GM12878 (cell line): ENCODE measurements at regions of chr18 and their contacts with region 1.

Region 1: DNA sequence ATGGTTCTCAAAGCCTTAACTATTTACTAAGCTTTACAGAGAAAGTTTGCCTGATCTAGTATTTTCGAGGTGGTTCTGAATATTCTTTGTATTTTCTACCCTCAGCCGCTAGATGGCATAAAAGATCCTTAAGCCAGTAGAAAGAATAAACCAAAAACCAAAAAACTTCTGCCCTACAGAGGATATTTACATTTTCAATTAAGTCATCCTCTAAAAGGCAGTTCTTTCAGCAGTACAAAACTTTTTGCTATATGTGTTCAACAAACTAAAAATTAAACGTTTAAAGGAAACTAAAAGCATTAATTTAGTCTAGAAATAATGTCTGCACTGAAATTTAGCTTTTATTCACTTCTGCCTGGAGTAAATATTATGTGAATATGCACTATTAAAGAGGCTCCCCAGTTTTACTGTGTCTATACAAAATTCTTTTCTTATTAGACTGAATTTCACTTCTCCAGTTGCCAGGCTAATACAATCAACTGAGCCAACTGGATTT is 297.5 kb downstream of the PIEZO2 start:
- DNase-seq: peak; percentile 61
- ATAC-seq: peak; percentile 80
- H3K4me3 ChIP-seq: no peak overlapping the region
- H3K27ac ChIP-seq: peak overlapping the region; percentile 69
- H3K4me1 ChIP-seq: peaks cover 28% of the 10 kb centered on the region; the same call in 1 of the 2 replicates
- H3K27me3 ChIP-seq: no peaks in the 10 kb centered on the region
- CTCF ChIP-seq: peak; percentile 57 to 83 (median 61); a peak in 5 of 6 replicates
- EP300 ChIP-seq: no peak
- POLR2A ChIP-seq: no peak
- RAD21 ChIP-seq: peak; percentile 96

Region 2: DNA sequence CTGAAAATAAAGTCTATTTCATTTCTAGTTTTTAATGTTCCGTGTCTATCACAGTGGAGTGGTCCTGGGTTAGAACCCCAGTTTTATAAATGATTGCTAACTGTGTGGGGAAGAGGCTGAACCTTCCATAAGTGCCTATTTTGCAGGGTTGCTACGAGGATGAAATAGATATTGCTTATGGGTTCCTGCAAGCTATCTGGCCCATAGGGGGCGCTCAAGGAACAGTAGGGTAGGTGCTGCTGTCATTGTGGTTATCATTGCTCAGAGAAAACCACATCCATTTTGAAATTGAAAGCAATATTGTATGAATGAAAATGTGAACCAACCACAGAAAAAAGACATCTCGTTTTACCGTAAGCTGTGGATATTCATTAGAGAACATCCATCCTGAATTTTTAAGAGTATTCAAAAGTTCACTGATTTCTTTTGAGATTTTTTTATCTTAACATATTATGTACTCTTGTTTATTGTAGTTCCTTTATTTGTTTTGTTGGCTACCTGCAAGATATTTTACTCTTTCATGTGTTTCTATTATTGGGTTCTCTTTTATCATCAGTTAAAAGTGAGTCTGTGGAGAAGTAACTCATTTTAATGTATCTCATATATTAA is 64.5 kb before region 1 on chr18:
- CTCF ChIA-PET with region 1: interaction called, 13 read pairs
- POLR2A ChIA-PET with region 1: interaction called, 9 read pairs
- RAD21 ChIA-PET with region 1: interaction called, 21 read pairs
- SMC1A ChIA-PET with region 1: interaction called, 55 read pairs
- in situ Hi-C with region 1: no loop called
- intact Hi-C with region 1: loop called (anchors 2 kb)
- DNase-seq: peak; percentile 77
- ATAC-seq: peak; percentile 96
- H3K4me3 ChIP-seq: no peak overlapping the region
- H3K27ac ChIP-seq: no peak overlapping the region
- H3K4me1 ChIP-seq: no peaks in the 10 kb centered on the region; the same call in 1 of the 2 replicates
- H3K27me3 ChIP-seq: no peaks in the 10 kb centered on the region
- CTCF ChIP-seq: peak; percentile 79 to 97 (median 82)
- EP300 ChIP-seq: peak; percentile 48 to 55; a peak in 2 of 4 replicates
- POLR2A ChIP-seq: no peak
- RAD21 ChIP-seq: peak; percentile 88

Region 3: GRCh38 chr18:10878703-10879102 is 26.8 kb after region 1 on chr18:
- CTCF ChIA-PET with region 1: interaction called, 35 read pairs
- POLR2A ChIA-PET with region 1: no interaction called
- RAD21 ChIA-PET with region 1: interaction called, 25 read pairs
- SMC1A ChIA-PET with region 1: interaction called, 35 read pairs
- in situ Hi-C with region 1: no loop called
- intact Hi-C with region 1: no loop called
- DNase-seq: peak; percentile 93
- ATAC-seq: peak; percentile 82
- H3K4me3 ChIP-seq: no peak overlapping the region
- H3K27ac ChIP-seq: peak overlapping the region; percentile 88
- H3K4me1 ChIP-seq: peaks cover 49% of the 10 kb centered on the region
- H3K27me3 ChIP-seq: no peaks in the 10 kb centered on the region
- CTCF ChIP-seq: no peak
- EP300 ChIP-seq: peak; percentile 90 to 96
- POLR2A ChIP-seq: no peak
- RAD21 ChIP-seq: 0 out of 2 replicates have a peak, but pooled peaks have one; percentile 17

Region 4: GRCh38 chr18:10953672-10954071 is 101.8 kb after region 1 on chr18:
- CTCF ChIA-PET with region 1: interaction called, 17 read pairs
- POLR2A ChIA-PET with region 1: interaction called, 4 read pairs
- RAD21 ChIA-PET with region 1: interaction called, 17 read pairs
- SMC1A ChIA-PET with region 1: interaction called, 26 read pairs
- in situ Hi-C with region 1: no loop called
- intact Hi-C with region 1: loop called (anchors 1 kb)
- DNase-seq: peak; percentile 84
- ATAC-seq: peak; percentile 65
- H3K4me3 ChIP-seq: peak overlapping the region; percentile 30; the same call in 1 of the 2 replicates
- H3K27ac ChIP-seq: peak overlapping the region; percentile 100
- H3K4me1 ChIP-seq: peaks cover 41% of the 10 kb centered on the region
- H3K27me3 ChIP-seq: no peaks in the 10 kb centered on the region
- CTCF ChIP-seq: no peak; a peak in 1 of 6 replicates
- EP300 ChIP-seq: peak; percentile 55 to 69; a peak in 3 of 4 replicates
- POLR2A ChIP-seq: peak; percentile 80
- RAD21 ChIP-seq: peak; percentile 21; the same call in 1 of the 2 replicates

Region 5: GRCh38 chr18:11052800-11053199 is 200.9 kb after region 1 on chr18:
- CTCF ChIA-PET with region 1: interaction called, 13 read pairs
- POLR2A ChIA-PET with region 1: no interaction called
- RAD21 ChIA-PET with region 1: interaction called, 4 read pairs
- SMC1A ChIA-PET with region 1: interaction called, 17 read pairs
- in situ Hi-C with region 1: no loop called
- intact Hi-C with region 1: no loop called
- DNase-seq: no peak
- ATAC-seq: peak; percentile 92
- H3K4me3 ChIP-seq: no peak overlapping the region
- H3K27ac ChIP-seq: peak overlapping the region; percentile 22; the same call in 1 of the 2 replicates
- H3K4me1 ChIP-seq: peaks cover 15% of the 10 kb centered on the region
- H3K27me3 ChIP-seq: no peaks in the 10 kb centered on the region
- CTCF ChIP-seq: no peak
- EP300 ChIP-seq: no peak; a peak in 1 of 4 replicates
- POLR2A ChIP-seq: no peak
- RAD21 ChIP-seq: no peak